Right ventricle myocardium inferior (tissue), 1 donor: ENCODE measurements at regions of chr7 and their contacts with region 1.

Region 1: GRCh38 chr7:18666107-18666728 is 170.7 kb downstream of the HDAC9 start:
- DNase-seq: peak; percentile 72
- ATAC-seq: peak; percentile 86

Region 2: GRCh38 chr7:18191341-18191740 is 474.9 kb before region 1 on chr7:
- intact Hi-C with region 1: loop called (anchors 10 kb)
- DNase-seq: no peak
- ATAC-seq: no peak

Region 3: DNA sequence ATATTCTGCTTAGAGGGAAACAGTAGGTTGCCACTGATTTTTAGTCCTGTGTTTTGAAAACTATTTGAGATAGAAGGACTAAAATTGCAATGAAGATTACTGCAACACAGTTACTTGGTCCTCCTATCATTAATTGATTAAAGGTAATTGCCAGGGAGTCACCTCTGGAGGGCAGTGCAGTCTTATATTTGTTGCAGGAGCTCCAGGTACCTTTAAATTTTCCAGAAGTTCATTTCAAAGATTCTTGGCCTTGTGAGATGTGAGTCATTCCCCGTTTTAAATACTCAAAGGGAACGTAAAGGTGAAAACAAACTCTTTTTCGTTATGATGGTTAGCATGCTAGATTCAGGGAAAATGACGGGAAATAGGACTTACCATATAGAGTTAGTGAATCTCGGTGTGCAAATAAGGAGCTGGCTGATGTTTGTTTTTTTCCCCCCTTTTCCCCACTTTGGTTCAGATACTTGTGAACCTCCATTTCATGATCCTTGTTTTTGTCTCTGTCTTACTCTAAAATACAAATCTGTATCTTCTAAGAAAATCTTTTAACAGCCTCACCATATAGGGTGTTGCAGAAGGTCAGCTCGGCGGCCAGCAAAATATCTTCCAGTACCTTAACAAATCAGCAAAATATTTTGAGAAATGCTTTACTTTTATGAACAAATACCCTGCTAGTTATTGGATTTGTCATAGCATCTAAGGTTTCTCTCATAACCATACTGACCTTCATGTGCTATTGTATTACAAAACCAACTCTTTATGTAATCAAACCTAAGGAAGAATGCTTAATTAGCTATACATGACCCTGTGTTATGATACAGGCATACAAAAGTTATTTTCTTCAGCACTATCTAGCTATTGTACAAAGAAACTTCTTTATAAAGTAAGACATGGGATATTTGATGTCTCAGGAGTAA is 313.6 kb before region 1 on chr7:
- intact Hi-C with region 1: loop called (anchors 2 kb)
- DNase-seq: no peak
- ATAC-seq: peak; percentile 44

Region 4: DNA sequence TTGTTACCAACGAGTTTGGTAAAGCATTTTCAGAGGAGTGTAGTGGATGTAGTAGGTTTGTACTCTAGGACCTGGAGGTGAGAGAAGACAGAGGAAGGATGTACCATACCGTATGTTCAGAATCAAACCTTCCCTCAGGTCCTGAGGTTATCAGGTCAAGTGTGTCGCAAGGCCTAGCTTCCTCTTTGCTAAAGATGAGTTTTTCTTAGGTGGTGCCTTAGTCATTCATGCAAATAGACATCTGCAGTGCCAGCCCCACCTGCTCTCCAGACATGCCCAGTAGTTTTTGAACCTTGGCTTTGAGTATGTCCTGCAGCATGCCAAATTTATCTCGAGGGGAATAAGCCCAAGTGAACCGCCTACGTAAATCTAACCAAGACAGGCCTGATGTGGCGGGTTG is 99.4 kb before region 1 on chr7:
- intact Hi-C with region 1: no loop called
- DNase-seq: no peak
- ATAC-seq: no peak

Region 5: DNA sequence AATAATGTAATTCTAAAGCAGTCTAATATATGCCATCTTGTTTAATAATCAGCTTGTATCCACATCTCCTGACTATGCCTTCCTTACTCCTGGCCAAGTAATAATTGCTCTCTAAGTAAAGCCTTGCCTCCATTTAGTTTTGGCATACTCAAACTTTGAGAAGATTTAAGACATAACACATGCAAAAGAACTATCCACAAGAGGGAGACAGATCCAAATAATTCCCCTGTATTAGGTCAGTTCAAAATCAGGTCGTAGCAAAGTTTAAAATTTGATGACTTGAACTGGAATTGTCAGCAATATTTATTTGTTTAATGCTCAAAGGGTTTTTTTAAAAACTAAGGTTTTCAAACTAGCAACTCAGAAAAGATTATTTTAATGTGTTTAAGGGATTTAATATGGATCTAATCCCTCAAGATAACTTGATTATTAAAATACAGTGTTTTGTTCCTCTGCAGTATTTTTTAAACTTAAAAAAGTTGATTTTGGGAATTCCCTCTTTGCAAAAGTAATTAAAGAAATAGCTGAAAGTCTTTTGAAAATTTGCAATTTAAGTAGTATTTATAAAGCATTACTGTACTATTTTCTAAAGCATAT is 75.4 kb before region 1 on chr7:
- intact Hi-C with region 1: loop called (anchors 1 kb)
- DNase-seq: no peak
- ATAC-seq: no peak

Region 6: DNA sequence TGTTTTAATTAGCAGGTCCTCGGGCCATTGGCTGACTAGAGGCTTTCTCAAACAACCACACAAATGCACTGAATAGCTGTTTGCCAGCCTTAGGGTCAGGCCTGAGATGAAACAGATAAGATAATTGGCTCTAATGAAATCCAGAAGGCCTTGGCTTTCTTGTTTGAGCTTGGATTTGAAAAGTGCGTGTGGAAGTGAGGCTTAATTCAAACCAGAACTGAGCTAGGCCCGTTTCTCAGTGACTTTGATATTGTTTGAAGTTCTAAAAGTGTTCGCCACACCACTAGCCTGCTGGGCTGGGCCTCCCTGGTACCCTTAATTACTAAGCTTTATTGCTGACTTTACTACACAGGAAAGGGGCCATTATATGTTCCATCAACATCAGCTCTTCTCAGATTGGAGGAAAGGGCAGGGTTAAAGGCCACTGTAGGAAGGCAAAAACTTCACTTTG is 180.6 kb after region 1 on chr7:
- intact Hi-C with region 1: no loop called
- DNase-seq: no peak
- ATAC-seq: no peak

Region 7: DNA sequence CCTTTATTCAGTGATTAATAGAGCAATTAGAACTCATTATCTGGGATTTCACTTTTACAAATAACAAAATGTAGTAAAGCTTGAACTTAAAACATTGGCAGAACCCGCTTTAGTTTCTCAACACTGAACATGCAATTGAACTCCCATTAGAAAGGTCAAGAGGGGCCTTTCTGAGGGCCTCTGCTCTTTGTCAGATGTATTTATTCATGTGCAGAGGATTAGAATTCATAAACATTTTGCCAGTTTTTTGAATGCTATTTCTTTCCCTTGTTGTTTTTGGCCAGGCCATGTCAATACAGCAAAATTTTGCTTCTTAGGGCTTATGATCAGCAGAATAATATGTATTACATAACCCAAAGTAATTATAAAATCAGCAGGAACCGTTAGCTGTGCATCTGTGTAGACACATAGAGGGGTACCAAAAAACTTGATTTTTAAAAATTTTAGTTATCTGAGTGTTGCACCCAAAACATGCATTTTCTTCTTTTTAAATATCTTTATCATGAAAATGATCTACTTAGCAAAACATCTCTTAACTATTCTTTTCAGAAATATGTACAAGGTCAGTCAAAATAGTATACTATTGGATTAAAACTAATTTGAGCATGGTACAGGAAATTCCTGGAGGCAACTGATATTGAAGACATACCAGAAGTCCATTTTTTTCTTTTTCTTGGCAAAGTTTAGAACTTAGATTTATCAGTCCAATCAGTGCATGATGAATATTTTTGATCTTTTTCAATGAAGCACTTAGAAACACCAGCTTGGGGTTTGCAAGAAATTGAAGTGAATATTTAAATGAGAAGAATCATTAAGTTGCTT is 273.8 kb after region 1 on chr7:
- intact Hi-C with region 1: no loop called
- DNase-seq: no peak
- ATAC-seq: no peak